ENCODE measurements at regions of chr12 and their contacts with region 1.

Region 1: DNA sequence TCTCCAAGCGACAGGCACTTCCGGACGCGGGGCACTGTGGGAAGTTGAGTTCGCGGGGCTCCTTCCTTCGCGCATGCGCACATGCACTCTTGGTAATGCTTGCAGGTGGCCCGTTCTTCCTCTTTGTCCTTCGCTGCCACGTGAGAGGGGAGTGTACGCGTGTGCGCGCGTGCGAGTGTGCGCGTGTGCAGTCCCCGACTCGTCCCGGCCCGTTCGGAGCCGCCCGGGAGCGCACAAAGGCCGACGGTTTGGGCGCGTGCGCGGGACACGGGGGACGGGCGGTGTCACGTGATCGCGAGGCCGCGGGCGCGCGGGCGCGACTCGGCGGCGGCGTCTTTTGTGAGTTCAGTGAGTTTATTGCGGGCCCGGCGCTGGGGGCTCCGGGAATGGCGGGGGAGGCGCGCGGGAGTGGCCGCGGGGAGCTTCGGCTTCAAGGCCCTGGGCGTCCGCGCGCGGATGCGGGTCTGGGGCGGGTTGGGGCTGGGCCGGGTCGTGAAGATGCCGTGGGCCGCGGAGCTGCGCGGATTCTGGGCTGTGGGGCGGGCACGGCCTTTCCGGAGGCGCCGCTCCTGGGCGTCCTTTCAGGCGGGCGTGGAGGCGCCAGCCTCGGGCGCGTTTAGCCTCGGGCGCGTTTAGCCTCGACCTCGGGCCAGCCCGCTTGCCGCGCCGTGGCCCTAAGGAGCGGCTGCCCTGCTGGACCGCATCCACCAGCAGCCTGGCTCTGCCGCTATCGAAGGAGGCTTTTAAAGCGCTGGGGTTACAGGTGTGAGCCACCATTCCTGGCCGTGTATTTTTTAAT is at the start of gene ZNF84:
- DNase-seq: peak; percentile 97
- H3K4me3 Mint-ChIP-seq: peak within 1 kb of the TSS; percentile 86
- H3K27ac Mint-ChIP-seq: peak within 1 kb of the TSS; percentile 97
- H3K4me1 Mint-ChIP-seq: no peaks in the 10 kb centered on the region
- H3K27me3 Mint-ChIP-seq: no peaks in the 10 kb centered on the region
- total RNA-seq, gene ZNF84: 18.3 and 21.2 TPM in 2 replicates

Region 2: DNA sequence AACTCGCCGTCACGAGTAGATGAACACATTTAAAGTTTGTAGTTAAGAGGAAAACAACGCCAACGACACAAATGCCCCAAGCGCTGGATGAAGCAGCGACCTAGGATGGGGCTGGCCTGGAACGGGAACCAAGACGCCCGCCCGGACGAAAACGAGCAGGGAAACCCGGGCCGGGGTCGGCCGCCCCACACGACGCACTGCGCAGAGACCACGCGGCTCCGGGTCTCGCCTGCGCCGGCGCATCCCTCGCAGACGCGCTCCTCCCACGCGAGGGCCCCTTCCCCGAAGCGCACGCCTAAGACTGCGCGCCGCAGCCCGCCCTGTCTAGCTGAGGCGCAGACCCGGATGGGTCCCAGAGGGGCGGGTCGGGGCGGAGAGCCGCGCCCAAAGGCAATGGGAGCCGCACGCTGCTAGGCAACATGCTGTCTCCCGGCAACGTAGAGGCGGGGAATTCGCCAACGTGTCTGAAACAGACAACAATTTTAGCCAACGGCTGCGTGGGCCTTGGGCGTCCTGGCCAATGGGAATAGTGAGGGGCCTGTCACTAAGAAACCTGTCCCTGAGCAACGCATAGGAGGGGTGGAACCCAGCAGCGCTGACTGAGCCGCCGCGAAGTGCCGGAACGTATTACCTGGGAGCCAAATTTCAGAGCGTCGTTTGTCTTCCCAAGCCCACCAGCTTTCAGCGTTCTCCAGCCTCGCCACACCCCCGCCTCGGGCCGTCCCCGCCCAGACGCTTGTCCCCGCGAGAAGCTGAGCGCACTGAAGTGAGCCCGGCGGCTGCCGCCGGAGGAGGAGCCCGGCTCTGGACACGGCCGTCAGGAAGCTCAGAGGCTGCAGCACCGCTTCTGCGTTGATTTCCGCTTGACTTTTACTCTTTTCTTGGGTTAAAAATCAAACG is 129.0 kb before region 1 on chr12:
- intact Hi-C with region 1: loop called (anchors 1 kb)
- DNase-seq: peak; percentile 92
- H3K4me3 Mint-ChIP-seq: peak overlapping the region; percentile 88
- H3K27ac Mint-ChIP-seq: peak overlapping the region; percentile 91
- H3K4me1 Mint-ChIP-seq: no peaks in the 10 kb centered on the region
- H3K27me3 Mint-ChIP-seq: peaks cover 11% of the 10 kb centered on the region

Region 3: DNA sequence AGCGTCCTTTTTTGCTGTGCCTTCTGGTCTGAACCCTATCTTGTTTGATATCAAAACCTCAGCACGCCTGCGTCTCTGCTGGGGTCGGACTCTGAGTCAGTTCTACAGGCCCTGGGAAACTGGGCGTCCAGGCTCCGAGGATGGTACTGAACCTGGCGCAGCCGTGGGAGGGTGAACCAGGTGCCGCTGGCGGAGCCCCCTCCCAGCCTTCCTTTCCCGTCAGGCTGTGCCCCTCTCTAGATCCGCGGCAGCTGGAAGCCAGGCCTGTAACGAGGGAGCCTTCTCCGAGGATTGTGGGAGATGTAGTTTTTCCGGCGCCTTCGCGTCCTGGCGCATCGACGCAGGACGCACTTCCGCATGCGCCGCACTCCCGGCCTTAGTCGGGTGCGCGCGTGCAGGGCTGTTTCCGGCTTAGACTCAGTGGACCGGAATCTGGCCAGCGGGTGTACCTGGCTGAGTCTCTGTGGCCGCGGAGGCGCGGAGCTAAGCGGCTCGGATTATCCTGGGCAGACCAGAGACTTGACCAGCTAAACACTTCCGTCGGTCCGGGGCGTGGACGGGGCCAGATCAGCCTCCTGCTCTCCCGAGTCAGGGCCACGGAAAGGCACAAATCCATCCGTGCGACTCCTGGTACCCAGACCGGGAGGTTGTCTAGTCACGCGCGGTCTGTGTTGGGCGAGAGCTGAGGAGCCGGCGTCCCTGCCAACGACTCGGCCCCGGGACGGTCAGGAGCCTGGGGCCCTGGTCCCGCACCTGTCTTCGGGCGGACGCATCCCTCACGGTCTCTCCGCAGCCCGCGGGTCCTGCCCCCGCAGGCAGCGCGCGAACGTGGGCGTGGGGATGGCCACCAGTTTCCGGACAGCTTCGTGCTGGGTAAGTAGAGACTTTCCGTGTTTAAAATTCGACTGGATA is 51.1 kb before region 1 on chr12 and contains the start of gene ZNF26:
- intact Hi-C with region 1: loop called (anchors 1 kb)
- DNase-seq: peak; percentile 84
- H3K4me3 Mint-ChIP-seq: peak within 1 kb of the TSS; percentile 90
- H3K27ac Mint-ChIP-seq: peak within 1 kb of the TSS; percentile 92
- H3K4me1 Mint-ChIP-seq: peaks cover 22% of the 10 kb centered on the region
- H3K27me3 Mint-ChIP-seq: no peaks in the 10 kb centered on the region
- total RNA-seq, gene ZNF26: 18.2 and 22.1 TPM in 2 replicates

Region 4: GRCh38 chr12:133063556-133063955 is 26.1 kb after region 1 on chr12:
- intact Hi-C with region 1: no loop called
- DNase-seq: no peak
- H3K4me3 Mint-ChIP-seq: no peak overlapping the region
- H3K27ac Mint-ChIP-seq: no peak overlapping the region
- H3K4me1 Mint-ChIP-seq: no peaks in the 10 kb centered on the region
- H3K27me3 Mint-ChIP-seq: no peaks in the 10 kb centered on the region

Region 5: DNA sequence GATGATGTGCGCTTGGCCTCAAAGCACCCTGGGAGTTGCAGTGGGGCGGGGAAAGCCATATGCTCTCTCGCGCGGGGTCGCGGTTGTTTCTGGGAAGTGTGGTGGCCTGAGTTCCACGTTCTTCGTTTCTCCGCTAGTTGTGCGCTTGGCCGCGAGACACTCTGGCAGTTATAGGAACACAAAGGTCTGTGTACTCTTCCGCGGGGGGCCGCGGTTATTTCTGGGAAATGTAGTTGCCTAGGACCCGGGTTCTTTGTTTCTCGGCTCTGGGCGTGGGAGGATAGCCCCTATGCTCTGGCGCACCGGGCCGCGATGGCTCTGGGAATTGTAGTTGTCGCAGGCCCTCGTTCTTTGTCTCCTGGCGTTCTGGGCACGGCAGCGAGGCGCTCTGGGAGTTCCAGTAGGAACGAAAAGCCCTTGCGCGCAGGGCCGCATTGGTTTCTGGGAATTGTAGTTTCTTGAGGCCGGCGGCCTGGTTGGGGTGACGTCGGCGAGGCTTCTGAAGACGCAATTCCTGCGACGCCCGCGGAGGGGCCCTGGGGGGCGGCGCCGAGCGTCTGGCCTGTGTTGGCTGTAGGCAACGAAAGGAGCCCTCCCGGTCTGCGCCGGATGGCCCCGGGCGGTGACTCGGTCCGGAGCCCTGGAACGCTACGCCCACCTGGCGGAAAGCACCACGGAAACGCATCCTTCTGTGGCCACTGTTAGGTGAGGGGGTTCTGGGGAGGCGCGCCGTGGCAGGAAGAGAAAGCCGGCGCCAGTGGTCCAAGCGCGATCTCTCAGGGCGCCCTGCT is 43.2 kb after region 1 on chr12 and contains the start of gene ZNF140:
- intact Hi-C with region 1: loop called (anchors 1 kb)
- DNase-seq: peak; percentile 93
- H3K4me3 Mint-ChIP-seq: no peak within 1 kb of the TSS
- H3K27ac Mint-ChIP-seq: peak within 1 kb of the TSS; percentile 84
- H3K4me1 Mint-ChIP-seq: no peaks in the 10 kb centered on the region
- H3K27me3 Mint-ChIP-seq: no peaks in the 10 kb centered on the region
- total RNA-seq, gene ZNF140: 15.0 and 15.1 TPM in 2 replicates

Region 6: GRCh38 chr12:133181238-133181959 is 144.0 kb after region 1 on chr12 and contains the start of gene ZNF268:
- intact Hi-C with region 1: loop called (anchors 1 kb)
- DNase-seq: peak; percentile 87
- H3K4me3 Mint-ChIP-seq: peak within 1 kb of the TSS; percentile 97
- H3K27ac Mint-ChIP-seq: peak within 1 kb of the TSS; percentile 95
- H3K4me1 Mint-ChIP-seq: peaks cover 20% of the 10 kb centered on the region
- H3K27me3 Mint-ChIP-seq: no peaks in the 10 kb centered on the region
- total RNA-seq, gene ZNF268: 16.7 and 21.5 TPM in 2 replicates